Astrocyte of the cerebellum (primary cell): ENCODE measurements at regions of chr17 and their contacts with region 1.

Region 1: DNA sequence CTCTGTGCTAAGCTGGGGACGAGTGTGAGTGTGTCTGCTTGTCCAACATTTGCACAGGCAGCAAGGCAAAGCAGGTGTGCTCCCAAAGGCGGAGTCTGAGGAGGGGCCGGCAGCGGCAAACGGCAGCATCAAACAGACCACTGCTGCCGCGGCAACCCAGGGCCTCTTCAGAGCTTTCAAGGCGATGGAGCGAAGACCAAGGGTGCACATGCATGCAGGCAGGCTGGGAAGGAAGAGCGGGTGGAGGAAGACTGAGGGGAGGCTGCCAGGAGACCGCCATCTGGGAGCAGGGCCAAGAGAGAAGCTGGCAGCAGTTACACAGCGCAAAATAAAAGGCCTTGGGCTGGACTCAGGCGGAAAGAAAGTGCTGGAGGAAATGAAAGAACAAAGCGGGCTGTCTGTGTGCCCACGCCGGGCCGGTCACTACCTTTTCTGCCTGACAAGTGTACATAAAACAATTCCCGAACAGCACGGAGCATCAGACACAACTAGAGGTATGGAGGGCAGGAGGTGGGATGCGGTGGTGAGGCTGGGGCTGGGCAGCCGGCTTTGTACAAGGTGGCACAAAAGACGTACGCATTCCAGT is 8.5 kb downstream of the TIMM22 start:
- DNase-seq: peak; percentile 78
- H3K4me3 ChIP-seq: no peak overlapping the region
- CTCF ChIP-seq: no peak

Region 2: GRCh38 chr17:1055751-1056645 is 50.5 kb after region 1 on chr17:
- in situ Hi-C with region 1: loop called (anchors 10 kb)
- DNase-seq: no peak
- H3K4me3 ChIP-seq: no peak overlapping the region
- CTCF ChIP-seq: peak; percentile 67